Adrenal gland (tissue), 19 donors: ENCODE measurements at regions of chr5 and their contacts with region 1.

Region 1: GRCh38 chr5:170411100-170411499 is 21.9 kb upstream of the KCNMB1 start:
- DNase-seq: no peak
- H3K4me3 ChIP-seq: no peak overlapping the region
- H3K27ac ChIP-seq: no peak overlapping the region
- H3K4me1 ChIP-seq: no peaks in the 10 kb centered on the region
- H3K27me3 ChIP-seq: no peaks in the 10 kb centered on the region
- CTCF ChIP-seq: no peak
- POLR2A ChIP-seq: no peak

Region 2: DNA sequence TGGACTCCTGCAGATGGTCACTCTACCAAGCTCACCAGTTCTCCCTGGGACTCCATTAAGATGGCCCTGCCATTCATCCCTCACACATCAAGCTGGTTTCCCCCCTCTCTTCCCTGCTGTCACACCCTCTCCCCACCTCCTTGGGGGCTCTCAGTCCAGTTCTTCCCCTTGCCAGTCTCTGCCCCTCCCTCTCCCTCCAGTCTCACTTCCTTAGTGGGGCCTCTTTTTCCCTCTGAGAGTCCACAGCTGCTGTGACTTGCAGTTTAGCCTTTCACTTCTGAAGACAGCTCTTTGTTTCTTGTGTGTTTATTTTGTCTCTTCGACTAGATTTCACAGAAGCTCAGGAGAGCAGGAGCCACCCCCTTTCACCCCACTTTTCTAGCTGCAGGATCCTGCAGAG is 763.5 kb before region 1 on chr5:
- intact Hi-C with region 1: no loop called
- DNase-seq: no peak
- H3K4me3 ChIP-seq: no peak overlapping the region
- H3K27ac ChIP-seq: peak overlapping the region in 1 of 5 donors; percentile 44
- H3K4me1 ChIP-seq: no peaks in the 10 kb centered on the region
- H3K27me3 ChIP-seq: no peaks in the 10 kb centered on the region
- CTCF ChIP-seq: no peak
- POLR2A ChIP-seq: no peak

Region 3: DNA sequence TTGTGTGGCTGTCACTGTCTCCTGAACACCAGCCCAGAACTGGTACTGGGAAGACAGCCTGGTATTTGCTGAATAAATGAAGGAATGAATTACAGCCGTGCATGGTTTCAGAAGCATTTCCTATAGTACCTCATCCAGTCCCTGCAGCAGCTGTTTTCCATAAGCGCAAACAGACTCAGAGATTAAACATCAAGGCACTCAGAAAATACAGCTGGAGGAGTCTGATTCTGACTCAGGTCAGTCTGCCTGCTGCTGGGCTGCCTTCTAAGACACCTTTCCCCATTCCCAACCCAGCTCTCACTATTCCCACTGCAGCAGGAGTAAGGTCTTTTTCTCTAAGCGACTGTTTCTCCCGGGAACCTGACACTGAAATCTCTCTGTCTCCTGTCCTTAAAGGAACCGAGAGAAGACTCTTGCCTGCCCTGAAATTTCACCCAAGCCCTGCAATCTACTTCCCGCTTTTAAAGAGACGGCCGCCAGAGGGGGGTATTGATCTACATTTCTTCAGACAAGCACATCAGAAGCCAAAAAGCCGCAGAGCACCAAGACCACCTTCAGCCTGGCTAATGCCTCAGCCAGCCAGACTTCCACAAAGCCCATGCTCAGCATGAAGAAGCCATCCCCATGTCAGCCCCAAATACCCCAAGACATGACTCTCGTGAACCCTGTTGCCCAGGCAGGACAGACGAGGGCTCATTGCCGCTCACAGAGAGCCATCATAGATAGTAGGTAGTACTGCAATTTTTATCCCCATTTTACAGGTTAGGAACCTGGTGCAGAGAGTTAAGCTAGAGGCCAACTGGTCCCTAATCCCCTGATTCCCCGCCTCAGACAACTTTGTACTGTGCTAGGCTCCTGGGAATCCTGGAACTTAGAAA is 310.8 kb before region 1 on chr5:
- intact Hi-C with region 1: loop called in 1 of 2 experiments (anchors 10 kb)
- DNase-seq: peak; percentile 74 to 95 (median 91)
- H3K4me3 ChIP-seq: no peak overlapping the region
- H3K27ac ChIP-seq: no peak overlapping the region
- H3K4me1 ChIP-seq: peaks cover 0 to 5% of the 10 kb centered on the region in 2 donors
- H3K27me3 ChIP-seq: no peaks in the 10 kb centered on the region
- CTCF ChIP-seq: peak; percentile 57 to 90 (median 75)
- POLR2A ChIP-seq: no peak

Region 4: DNA sequence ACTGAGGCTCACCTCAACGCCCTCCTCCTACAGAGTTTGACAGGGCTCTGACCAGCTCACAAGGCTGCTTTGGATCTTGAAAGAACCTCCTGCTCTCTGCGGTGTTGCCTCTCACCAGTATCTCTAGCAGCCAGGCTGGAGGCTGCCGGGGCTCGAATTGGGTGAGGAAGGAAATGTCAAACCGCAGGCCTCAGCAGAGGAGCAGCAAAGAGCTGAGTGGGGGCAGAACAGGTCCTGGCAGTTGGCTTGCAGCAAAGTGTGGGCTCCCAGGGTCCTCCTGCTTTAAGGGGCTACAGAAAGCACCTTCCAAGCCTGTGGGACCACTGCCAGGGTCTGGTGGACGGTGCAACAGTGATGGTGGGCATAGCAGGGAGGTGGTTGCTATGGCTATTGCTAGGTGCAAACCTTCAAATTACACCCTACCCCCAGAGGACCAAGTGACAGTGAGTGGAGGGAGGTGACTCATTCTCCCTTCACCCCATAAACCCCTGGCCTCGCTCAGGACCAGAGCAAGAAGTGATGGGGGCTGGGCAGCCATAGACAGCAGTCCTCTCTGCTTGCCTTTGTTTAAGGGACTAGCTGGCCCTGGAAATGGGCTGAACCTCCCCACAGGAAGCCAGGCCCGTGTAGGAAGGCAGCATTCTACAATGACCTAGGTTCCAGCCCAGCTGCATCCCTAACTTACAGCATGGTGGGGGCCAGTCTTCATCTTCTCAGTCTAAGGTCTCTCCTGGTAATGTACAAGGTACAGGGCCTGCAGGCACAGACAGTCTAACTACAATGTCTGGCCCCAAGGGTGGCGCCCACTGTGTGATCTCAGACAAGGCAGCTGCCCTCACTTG is 132.3 kb before region 1 on chr5:
- intact Hi-C with region 1: loop called in 1 of 2 experiments (anchors 10 kb)
- DNase-seq: peak in 4 of 7 donors; percentile 29 to 42 (median 38)
- H3K4me3 ChIP-seq: no peak overlapping the region
- H3K27ac ChIP-seq: peak overlapping the region in 3 of 5 donors; percentile 3 to 78 (median 26)
- H3K4me1 ChIP-seq: peaks cover 4 to 19% of the 10 kb centered on the region in 2 donors
- H3K27me3 ChIP-seq: no peaks in the 10 kb centered on the region
- CTCF ChIP-seq: no peak
- POLR2A ChIP-seq: no peak